ENCODE measurements at regions of chr10 and their contacts with region 1.

Region 1: GRCh38 chr10:96556003-96556402 is 30.8 kb downstream of the TM9SF3 start:
- DNase-seq: peak in 1 of 2 experiments; percentile 25
- H3K4me3 ChIP-seq: no peak overlapping the region
- H3K4me3 Mint-ChIP-seq: no peak overlapping the region
- H3K27ac Mint-ChIP-seq: no peak overlapping the region
- H3K4me1 ChIP-seq: no peaks in the 10 kb centered on the region
- H3K4me1 Mint-ChIP-seq: no peaks in the 10 kb centered on the region
- H3K27me3 ChIP-seq: no peaks in the 10 kb centered on the region
- H3K27me3 Mint-ChIP-seq: no peaks in the 10 kb centered on the region
- CTCF ChIP-seq: peak in 1 of 2 experiments; percentile 65

Region 2: GRCh38 chr10:96395931-96396877 is 159.8 kb before region 1 on chr10:
- CTCF ChIA-PET with region 1: no interaction called
- POLR2A ChIA-PET with region 1: no interaction called
- intact Hi-C with region 1: loop called (anchors 2 kb)
- DNase-seq: peak; percentile 56 to 67
- H3K4me3 ChIP-seq: 0 out of 2 replicates have a peak overlapping the region, but pooled peaks have one; percentile 8
- H3K4me3 Mint-ChIP-seq: no peak overlapping the region
- H3K27ac Mint-ChIP-seq: no peak overlapping the region
- H3K4me1 ChIP-seq: no peaks in the 10 kb centered on the region
- H3K4me1 Mint-ChIP-seq: no peaks in the 10 kb centered on the region
- H3K27me3 ChIP-seq: no peaks in the 10 kb centered on the region; the same call in 1 of the 2 replicates
- H3K27me3 Mint-ChIP-seq: peaks cover 22% of the 10 kb centered on the region
- CTCF ChIP-seq: peak; percentile 88 to 94

Region 3: GRCh38 chr10:96491299-96491698 is 64.7 kb before region 1 on chr10:
- CTCF ChIA-PET with region 1: no interaction called
- POLR2A ChIA-PET with region 1: no interaction called
- intact Hi-C with region 1: no loop called
- DNase-seq: peak in 1 of 2 experiments; percentile 35
- H3K4me3 ChIP-seq: no peak overlapping the region
- H3K4me3 Mint-ChIP-seq: no peak overlapping the region
- H3K27ac Mint-ChIP-seq: no peak overlapping the region
- H3K4me1 ChIP-seq: no peaks in the 10 kb centered on the region
- H3K4me1 Mint-ChIP-seq: no peaks in the 10 kb centered on the region
- H3K27me3 ChIP-seq: no peaks in the 10 kb centered on the region
- H3K27me3 Mint-ChIP-seq: peaks cover 8% of the 10 kb centered on the region
- CTCF ChIP-seq: peak; percentile 38 to 59

Region 4: DNA sequence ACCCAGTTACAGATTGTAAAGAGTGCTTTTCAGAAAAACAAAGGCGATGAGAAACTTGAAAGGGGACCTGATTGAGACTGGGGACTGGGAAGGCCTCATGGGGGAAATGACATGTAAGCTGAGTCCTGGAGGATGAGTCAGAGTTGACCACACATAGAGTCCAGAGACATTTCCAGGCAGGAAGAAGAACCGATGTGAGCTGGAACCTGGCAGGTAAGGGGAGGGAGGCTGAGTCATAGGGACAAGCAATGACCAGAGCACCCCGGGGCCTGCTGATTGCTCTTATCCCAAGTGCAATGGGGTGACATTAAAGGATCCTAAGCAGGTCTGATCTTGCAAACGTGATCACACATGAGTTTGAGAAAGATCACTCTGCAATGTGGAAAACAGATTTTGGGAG is 54.0 kb before region 1 on chr10:
- CTCF ChIA-PET with region 1: no interaction called
- POLR2A ChIA-PET with region 1: no interaction called
- intact Hi-C with region 1: no loop called
- DNase-seq: no peak
- H3K4me3 ChIP-seq: no peak overlapping the region
- H3K4me3 Mint-ChIP-seq: no peak overlapping the region
- H3K27ac Mint-ChIP-seq: no peak overlapping the region
- H3K4me1 ChIP-seq: no peaks in the 10 kb centered on the region
- H3K4me1 Mint-ChIP-seq: no peaks in the 10 kb centered on the region
- H3K27me3 ChIP-seq: no peaks in the 10 kb centered on the region
- H3K27me3 Mint-ChIP-seq: peaks cover 17% of the 10 kb centered on the region
- CTCF ChIP-seq: no peak

Region 5: DNA sequence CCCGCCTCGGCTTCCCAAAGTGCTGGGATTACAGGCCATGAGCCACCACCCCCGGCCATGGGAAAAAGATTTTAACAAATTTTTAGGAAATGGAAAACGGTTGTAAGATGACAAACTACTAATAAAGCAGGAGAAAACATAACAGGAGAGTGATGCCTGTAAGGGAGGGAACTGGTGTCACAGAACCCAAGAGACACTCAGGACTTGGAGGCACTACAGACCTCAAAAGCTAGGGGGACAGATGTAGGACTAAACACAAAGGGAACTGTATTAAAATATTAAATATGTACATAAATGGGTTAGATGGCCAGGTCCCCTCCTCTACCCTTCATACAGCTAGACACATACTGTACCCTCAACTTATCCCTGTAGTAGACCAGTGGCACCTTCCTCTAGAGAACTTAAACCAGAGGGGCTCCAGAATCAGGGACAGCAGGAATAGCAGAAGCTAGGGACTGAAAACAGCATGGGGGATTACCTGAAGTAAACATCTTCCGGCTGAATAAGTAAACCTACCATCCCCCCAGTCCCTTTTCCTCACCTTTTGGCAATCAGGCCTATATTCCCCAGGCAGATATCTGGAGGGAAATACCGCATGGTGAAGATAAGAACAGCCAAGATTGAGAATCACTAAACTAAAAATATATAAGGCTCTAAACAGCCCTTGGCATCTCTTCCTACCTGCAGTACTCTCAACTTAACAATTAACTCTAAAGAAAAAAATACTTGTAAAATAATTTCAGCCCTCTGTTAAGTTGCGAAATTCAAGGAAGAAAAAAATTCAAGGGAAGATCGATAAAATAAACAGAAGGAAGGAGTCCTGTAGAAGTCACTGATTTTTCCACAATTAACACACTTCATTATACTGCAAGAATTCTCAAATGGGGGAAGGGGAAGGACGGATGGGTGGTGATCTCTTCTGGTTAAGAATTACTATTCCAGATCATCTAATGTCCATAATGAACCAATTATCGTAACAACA is 15.3 kb after region 1 on chr10:
- CTCF ChIA-PET with region 1: no interaction called
- POLR2A ChIA-PET with region 1: no interaction called
- intact Hi-C with region 1: no loop called
- DNase-seq: no peak
- H3K4me3 ChIP-seq: no peak overlapping the region
- H3K4me3 Mint-ChIP-seq: no peak overlapping the region
- H3K27ac Mint-ChIP-seq: no peak overlapping the region
- H3K4me1 ChIP-seq: no peaks in the 10 kb centered on the region
- H3K4me1 Mint-ChIP-seq: no peaks in the 10 kb centered on the region
- H3K27me3 ChIP-seq: no peaks in the 10 kb centered on the region
- H3K27me3 Mint-ChIP-seq: no peaks in the 10 kb centered on the region
- CTCF ChIP-seq: no peak

Region 6: DNA sequence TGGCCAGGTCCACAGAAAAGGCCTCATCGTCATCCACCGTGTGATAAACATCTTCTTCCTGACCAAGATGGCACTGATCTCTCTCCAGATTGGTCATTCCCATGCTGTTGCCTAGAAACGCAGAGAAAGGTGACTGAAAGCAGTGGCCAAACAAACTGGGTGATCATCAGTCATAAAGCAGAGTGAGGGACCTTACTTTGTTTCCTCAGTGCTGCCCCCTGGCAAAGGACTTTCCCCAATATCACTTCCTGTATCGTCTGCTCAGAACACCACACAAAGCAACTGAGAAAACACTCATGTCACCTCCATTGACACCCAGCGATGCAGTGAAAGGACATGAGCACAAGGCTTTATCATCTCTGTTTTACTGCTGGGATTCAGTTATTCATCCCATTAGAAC is 70.8 kb after region 1 on chr10:
- CTCF ChIA-PET with region 1: no interaction called
- POLR2A ChIA-PET with region 1: no interaction called
- intact Hi-C with region 1: no loop called
- DNase-seq: peak in 1 of 2 experiments; percentile 47
- H3K4me3 ChIP-seq: no peak overlapping the region
- H3K4me3 Mint-ChIP-seq: no peak overlapping the region
- H3K27ac Mint-ChIP-seq: no peak overlapping the region
- H3K4me1 ChIP-seq: peaks cover 17% of the 10 kb centered on the region
- H3K4me1 Mint-ChIP-seq: peaks cover 2% of the 10 kb centered on the region
- H3K27me3 ChIP-seq: no peaks in the 10 kb centered on the region
- H3K27me3 Mint-ChIP-seq: no peaks in the 10 kb centered on the region
- CTCF ChIP-seq: peak in 1 of 2 experiments; percentile 27